Lower leg skin (tissue), 4 donors: ENCODE measurements at regions of chr2 and their contacts with region 1.

Region 1: GRCh38 chr2:241081643-241082340 is 20.3 kb downstream of the MTERF4 start:
- DNase-seq: peak in 1 of 2 donors; percentile 84
- H3K4me3 ChIP-seq: no peak overlapping the region
- CTCF ChIP-seq: no peak
- POLR2A ChIP-seq: no peak

Region 2: GRCh38 chr2:241391892-241392665 is 310.3 kb after region 1 on chr2:
- intact Hi-C with region 1: loop called (anchors 5 kb)
- DNase-seq: peak in 1 of 2 donors; percentile 77
- H3K4me3 ChIP-seq: no peak overlapping the region
- CTCF ChIP-seq: no peak
- POLR2A ChIP-seq: no peak